ENCODE measurements at regions of chr6 and their contacts with region 1.

Region 1: GRCh38 chr6:95352064-95352795 is 225.1 kb upstream of the MANEA start:
- DNase-seq: peak; percentile 3
- ATAC-seq: no peak
- H3K4me3 ChIP-seq: no peak overlapping the region
- H3K27ac ChIP-seq: no peak overlapping the region
- H3K4me1 ChIP-seq: no peaks in the 10 kb centered on the region
- H3K27me3 ChIP-seq: no peaks in the 10 kb centered on the region
- CTCF ChIP-seq: peak in 1 of 3 experiments; percentile 4; a peak in 1 of 6 replicates
- POLR2A ChIP-seq: no peak
- RAD21 ChIP-seq: peak; percentile 46

Region 2: DNA sequence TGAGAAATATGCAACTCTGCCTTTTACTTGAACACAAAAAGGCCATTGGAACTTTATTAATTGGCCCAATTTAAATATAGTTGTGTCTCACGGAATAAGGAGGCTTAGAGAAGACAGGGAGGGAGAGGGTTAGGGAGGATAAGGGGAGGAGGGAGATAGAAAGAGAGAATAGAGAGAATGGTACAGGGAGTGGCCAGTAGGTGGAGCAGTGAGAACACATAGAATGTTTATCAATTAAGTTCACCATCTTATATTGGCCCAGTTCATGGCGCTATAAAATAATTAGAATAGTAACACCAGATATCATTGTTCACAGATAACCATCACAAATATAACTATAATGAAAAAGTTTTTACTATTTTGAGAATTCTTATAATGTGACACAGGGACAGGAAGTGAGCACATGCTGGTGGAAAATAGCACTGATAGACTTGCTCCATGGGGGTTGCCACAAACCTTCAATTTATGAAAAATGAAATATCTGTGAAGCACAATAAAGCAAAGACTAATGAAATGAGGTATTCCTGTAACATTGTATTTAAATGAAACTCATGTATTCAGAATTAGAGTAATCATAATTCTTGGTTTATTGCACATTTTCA is 149.0 kb before region 1 on chr6:
- CTCF ChIA-PET with region 1: no interaction called
- POLR2A ChIA-PET with region 1: no interaction called
- RAD21 ChIA-PET with region 1: no interaction called
- intact Hi-C with region 1: loop called (anchors 10 kb)
- DNase-seq: peak; percentile 23
- ATAC-seq: peak; percentile 82
- H3K4me3 ChIP-seq: no peak overlapping the region
- H3K27ac ChIP-seq: no peak overlapping the region
- H3K4me1 ChIP-seq: no peaks in the 10 kb centered on the region
- H3K27me3 ChIP-seq: no peaks in the 10 kb centered on the region
- CTCF ChIP-seq: peak; percentile 11 to 64 (median 61); a peak in 4 of 6 replicates
- POLR2A ChIP-seq: no peak
- RAD21 ChIP-seq: peak; percentile 46

Region 3: GRCh38 chr6:95413789-95414188 is 61.6 kb after region 1 on chr6:
- CTCF ChIA-PET with region 1: no interaction called
- POLR2A ChIA-PET with region 1: no interaction called
- RAD21 ChIA-PET with region 1: no interaction called
- intact Hi-C with region 1: no loop called
- DNase-seq: no peak
- ATAC-seq: no peak; the same call in 1 of the 2 replicates
- H3K4me3 ChIP-seq: no peak overlapping the region
- H3K27ac ChIP-seq: no peak overlapping the region
- H3K4me1 ChIP-seq: no peaks in the 10 kb centered on the region
- H3K27me3 ChIP-seq: no peaks in the 10 kb centered on the region
- CTCF ChIP-seq: peak in 1 of 3 experiments; percentile 20; a peak in 1 of 6 replicates
- POLR2A ChIP-seq: no peak
- RAD21 ChIP-seq: no peak